ENCODE measurements at regions of chr2 and their contacts with region 1.

Region 1: DNA sequence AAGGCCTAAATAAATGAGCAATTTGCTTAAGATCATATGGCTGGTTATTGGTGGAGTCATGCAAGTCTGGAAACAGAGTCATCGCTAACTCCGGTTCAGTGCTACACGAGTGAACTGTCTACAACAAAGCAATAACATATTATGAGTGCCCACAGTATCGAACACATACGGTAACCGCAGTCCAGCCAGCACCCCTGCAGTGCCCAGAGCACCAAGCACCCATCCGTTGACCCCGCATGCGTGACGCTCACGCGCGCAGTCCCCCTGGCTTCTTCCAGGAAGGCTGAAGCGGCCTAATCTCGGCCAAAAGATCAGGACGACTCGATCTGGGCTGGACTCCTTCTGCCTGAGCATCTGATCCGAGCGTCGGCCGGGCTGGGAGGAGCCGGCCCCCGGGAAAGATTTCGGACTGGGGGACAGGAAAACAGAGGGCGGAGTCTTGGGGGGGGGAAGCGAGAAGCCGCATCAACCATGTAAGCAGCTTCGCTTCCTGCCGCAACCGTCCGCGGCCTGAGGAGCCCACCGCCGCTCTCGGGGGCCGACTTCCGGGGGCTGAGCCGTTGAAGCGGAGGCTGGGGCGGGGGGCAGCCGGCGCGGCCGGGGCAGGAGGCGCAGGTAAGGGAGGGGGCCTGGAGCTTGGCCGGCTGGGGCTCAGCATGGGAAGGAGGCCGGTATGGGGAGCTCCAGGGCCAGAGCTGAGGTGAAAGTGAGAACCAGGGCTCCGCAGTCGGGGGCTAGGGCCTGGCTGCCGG is at the start of gene PIKFYVE:
- DNase-seq: peak; percentile 98
- H3K4me3 Mint-ChIP-seq: peak within 1 kb of the TSS; percentile 90
- H3K27ac Mint-ChIP-seq: peak within 1 kb of the TSS; percentile 96
- H3K4me1 Mint-ChIP-seq: peaks cover 27% of the 10 kb centered on the region
- H3K27me3 Mint-ChIP-seq: no peaks in the 10 kb centered on the region
- CTCF ChIP-seq: no peak
- total RNA-seq, gene PIKFYVE: 22.8 and 27.2 TPM in 2 replicates

Region 2: DNA sequence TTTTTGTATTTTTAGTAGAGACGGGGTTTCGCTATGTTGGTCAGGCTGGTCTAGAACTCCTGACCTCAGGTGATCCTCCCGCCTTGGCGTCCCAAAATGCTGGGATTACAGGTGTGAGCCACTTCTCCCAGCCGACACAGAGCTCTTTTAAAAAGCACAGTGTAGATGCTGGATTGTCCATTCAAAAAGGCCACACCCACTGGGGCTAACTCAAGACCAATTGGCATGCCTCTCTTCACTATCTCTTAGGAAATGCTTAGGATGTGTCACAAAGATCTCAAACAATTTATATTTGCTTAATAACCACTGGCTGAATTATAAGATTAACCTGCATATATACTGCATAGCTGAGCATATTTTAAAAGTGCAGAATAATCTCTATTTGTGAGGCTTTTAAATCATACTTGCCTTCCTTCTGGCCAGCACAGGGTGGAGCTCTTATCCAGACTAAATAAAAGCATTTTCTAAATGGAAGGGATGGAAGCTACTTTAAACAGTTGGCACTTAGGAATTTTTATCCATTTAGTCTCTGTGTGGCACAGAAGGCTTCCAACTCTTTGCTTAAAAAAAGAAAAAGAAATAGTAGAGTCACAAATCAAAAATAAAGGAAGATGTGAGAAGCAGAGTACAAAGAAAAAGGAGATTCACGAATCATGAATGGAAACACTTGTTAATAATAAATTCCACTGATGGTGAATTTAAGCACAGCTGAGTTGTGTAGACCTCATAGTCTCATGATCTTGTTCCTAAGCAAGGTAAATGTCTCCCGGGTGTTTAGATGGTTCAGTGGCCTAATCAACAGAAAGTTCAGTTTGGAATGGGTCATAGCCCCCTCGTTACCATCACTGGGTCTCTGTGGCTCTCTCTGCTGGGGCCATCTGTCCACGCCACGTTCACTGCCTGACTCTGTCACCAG is 164.0 kb before region 1 on chr2:
- CTCF ChIA-PET with region 1: interaction called, 7 read pairs
- POLR2A ChIA-PET with region 1: interaction called, 11 read pairs
- intact Hi-C with region 1: no loop called
- DNase-seq: peak; percentile 37
- H3K4me3 Mint-ChIP-seq: no peak overlapping the region
- H3K27ac Mint-ChIP-seq: no peak overlapping the region
- H3K4me1 Mint-ChIP-seq: peaks cover 4% of the 10 kb centered on the region
- H3K27me3 Mint-ChIP-seq: no peaks in the 10 kb centered on the region
- CTCF ChIP-seq: peak; percentile 30

Region 3: DNA sequence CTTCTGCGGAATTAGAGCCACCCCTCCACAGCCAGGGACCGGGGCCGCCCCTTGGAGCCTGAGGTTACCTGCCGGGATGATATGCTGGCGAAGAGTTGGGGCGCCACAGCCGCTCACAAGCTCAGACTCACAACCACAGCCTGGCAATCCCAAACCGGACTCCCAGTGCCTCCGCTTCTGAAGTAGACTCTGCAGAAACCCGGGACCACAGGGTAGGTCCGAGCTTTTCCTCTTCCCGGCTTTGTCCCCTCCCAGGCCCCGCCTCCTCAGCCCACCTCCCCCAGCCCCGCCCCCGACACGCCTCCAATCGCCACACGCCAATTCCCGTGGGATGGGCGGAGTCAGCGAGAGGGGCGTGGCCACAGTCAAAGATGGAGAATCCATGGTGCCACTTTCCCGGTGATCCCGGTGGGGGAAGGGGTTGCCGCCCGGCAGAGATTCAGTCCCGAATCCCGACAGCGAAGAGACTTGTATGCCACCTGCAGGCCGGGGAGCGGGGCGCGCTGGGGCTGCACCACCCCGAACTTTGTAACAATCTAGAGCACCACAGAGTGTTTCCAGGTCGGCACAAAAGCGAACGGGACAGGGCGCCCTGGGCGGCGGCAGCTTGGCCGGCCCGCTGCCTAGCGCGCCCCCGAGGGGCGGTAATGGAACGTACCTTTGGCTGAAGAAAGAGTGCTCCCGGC is 11.0 kb before region 1 on chr2 and contains the start of gene IDH1:
- CTCF ChIA-PET with region 1: interaction called, 32 read pairs
- POLR2A ChIA-PET with region 1: interaction called, 159 read pairs
- intact Hi-C with region 1: loop called (anchors 1 kb)
- DNase-seq: peak; percentile 97
- H3K4me3 Mint-ChIP-seq: peak within 1 kb of the TSS; percentile 83
- H3K27ac Mint-ChIP-seq: peak within 1 kb of the TSS; percentile 59
- H3K4me1 Mint-ChIP-seq: peaks cover 20% of the 10 kb centered on the region
- H3K27me3 Mint-ChIP-seq: no peaks in the 10 kb centered on the region
- CTCF ChIP-seq: peak; percentile 55
- total RNA-seq, gene IDH1: 50.2 and 122 TPM in 2 replicates

Region 4: GRCh38 chr2:208280933-208281332 is 15.0 kb after region 1 on chr2:
- CTCF ChIA-PET with region 1: interaction called, 7 read pairs
- POLR2A ChIA-PET with region 1: interaction called, 14 read pairs
- intact Hi-C with region 1: no loop called
- DNase-seq: no peak
- H3K4me3 Mint-ChIP-seq: no peak overlapping the region
- H3K27ac Mint-ChIP-seq: no peak overlapping the region
- H3K4me1 Mint-ChIP-seq: no peaks in the 10 kb centered on the region
- H3K27me3 Mint-ChIP-seq: no peaks in the 10 kb centered on the region
- CTCF ChIP-seq: no peak

Region 5: DNA sequence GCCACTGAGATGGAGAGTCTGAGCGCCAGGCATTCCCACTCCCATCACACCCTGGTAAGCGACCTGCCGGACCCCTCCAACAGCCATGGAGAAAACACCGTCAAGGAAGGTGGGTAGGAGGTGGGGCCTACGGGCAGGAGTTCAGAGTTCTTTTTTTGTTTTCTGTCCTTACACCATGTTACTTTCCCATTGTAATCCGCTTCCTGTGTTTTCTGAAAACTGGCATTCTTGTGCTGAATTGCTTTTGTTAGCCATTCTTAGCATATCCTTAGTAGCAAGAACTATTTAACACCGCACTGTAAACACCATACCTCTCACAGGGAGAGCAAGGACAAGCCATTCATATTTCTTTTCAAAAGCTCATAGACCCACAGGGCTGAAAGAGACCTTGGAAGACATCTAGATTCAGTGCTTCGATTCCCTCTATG is 1551.9 kb after region 1 on chr2:
- CTCF ChIA-PET with region 1: no interaction called
- POLR2A ChIA-PET with region 1: no interaction called
- intact Hi-C with region 1: no loop called
- DNase-seq: no peak
- H3K4me3 Mint-ChIP-seq: no peak overlapping the region
- H3K27ac Mint-ChIP-seq: no peak overlapping the region
- H3K4me1 Mint-ChIP-seq: no peaks in the 10 kb centered on the region
- H3K27me3 Mint-ChIP-seq: no peaks in the 10 kb centered on the region
- CTCF ChIP-seq: no peak